ENCODE measurements at regions of chr7 and their contacts with region 1.

Region 1: DNA sequence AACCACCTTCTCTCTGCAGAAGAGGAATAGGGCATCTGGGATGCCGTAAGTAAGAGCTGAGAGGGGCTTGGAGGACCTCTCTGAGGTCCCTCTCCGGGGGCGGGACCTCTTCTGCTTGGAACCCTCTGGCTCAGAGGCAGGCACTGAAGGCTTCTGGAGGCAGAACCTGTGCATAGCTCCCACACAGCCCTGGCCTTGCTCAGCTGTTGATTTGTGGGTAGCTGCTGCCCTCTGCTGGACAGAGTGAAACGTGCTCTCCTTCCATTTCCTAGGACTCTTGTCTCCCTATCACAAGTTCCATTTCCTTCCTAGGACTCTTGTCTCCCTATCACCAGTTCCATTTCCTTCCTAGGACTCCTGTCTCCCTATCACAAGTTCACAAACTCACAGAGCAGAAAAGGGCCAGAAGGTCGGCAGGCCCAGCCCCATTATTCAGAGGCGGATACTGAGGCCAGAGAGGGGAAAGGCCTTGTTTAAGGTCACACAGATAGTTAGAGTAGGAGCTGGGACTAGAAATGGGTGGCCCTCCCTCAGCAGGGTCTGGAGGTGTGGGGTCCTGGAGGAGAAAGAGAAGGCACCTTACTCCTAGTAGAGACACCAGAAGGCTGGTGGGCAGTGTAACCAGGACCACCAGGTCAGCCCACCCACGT is 30.3 kb upstream of the GARS1 start:
- DNase-seq: peak; percentile 81 to 85
- H3K4me3 ChIP-seq: no peak overlapping the region
- H3K4me3 Mint-ChIP-seq: no peak overlapping the region
- H3K27ac Mint-ChIP-seq: no peak overlapping the region
- H3K4me1 ChIP-seq: no peaks in the 10 kb centered on the region
- H3K4me1 Mint-ChIP-seq: no peaks in the 10 kb centered on the region
- H3K27me3 ChIP-seq: no peaks in the 10 kb centered on the region
- H3K27me3 Mint-ChIP-seq: no peaks in the 10 kb centered on the region
- CTCF ChIP-seq: peak; percentile 90 to 96

Region 2: DNA sequence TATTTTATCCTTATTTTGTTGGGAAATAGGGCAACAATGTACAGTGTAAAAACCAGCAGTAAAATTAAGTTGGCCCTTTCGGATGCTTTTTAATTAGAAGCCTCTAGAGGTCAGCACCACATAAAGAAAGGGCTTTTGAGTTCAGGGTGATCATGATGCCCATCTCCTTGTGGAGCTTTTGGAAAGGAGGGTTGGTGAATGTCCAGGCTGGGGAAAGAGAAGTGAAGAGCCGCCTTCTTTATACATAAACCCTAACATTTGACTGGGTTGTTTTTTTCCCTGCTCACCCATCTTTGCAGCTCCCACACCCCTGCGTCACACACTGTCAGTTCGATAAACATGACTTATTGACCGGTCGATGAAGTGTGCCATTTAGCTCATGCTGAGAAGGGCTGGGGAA is 399.8 kb before region 1 on chr7:
- CTCF ChIA-PET with region 1: interaction called, 10 read pairs
- POLR2A ChIA-PET with region 1: no interaction called
- intact Hi-C with region 1: loop called (anchors 1 kb)
- DNase-seq: peak in 1 of 2 experiments; percentile 46
- H3K4me3 ChIP-seq: no peak overlapping the region
- H3K4me3 Mint-ChIP-seq: no peak overlapping the region
- H3K27ac Mint-ChIP-seq: no peak overlapping the region
- H3K4me1 ChIP-seq: peaks cover 15% of the 10 kb centered on the region; the same call in 1 of the 2 replicates
- H3K4me1 Mint-ChIP-seq: no peaks in the 10 kb centered on the region
- H3K27me3 ChIP-seq: no peaks in the 10 kb centered on the region
- H3K27me3 Mint-ChIP-seq: peaks cover 13% of the 10 kb centered on the region
- CTCF ChIP-seq: peak; percentile 25 to 59

Region 3: DNA sequence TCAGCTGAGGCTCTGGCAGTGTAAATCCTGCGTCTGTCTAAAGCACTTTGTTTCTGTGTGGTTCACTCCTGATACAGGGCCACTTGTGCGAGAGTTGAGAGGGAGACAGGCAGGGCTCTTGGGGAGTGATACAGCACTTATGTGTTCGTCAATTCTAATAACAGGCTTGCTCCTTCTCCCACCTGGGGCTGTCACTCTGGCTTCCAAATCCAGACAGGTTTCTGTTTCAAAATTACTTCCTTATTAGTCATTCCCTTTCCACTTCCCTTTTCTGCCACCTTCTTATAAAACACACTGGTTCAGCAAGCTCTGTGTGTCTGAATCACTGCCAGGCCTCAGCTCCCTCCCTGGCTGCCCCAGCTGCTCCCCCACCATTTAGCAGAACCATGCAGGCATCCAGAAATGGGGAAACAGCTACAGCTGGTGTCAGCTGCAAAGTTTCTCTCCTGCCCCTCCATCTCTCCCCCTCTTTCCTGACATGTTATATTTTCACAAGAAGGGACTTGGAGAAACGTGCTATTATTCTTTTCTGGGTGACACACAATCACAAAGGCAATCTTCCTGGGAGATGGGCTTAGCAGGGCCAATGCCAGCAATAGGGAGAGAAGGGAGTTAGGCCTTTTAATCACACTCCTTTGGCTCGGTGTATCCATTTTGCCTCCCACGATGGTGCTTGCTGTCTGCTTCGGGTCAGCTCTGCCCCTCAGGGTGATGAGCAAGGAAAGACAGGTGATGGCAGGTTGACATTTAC is 338.3 kb before region 1 on chr7:
- CTCF ChIA-PET with region 1: no interaction called
- POLR2A ChIA-PET with region 1: no interaction called
- intact Hi-C with region 1: loop called (anchors 1 kb)
- DNase-seq: no peak
- H3K4me3 ChIP-seq: no peak overlapping the region
- H3K4me3 Mint-ChIP-seq: no peak overlapping the region
- H3K27ac Mint-ChIP-seq: no peak overlapping the region
- H3K4me1 ChIP-seq: 0 out of 2 replicates have a peak, but pooled peaks cover 5% of the 10 kb centered on the region
- H3K4me1 Mint-ChIP-seq: peaks cover 15% of the 10 kb centered on the region
- H3K27me3 ChIP-seq: no peaks in the 10 kb centered on the region; the same call in 1 of the 2 replicates
- H3K27me3 Mint-ChIP-seq: peaks cover 3% of the 10 kb centered on the region
- CTCF ChIP-seq: no peak

Region 4: GRCh38 chr7:30252885-30253795 is 311.2 kb before region 1 on chr7:
- CTCF ChIA-PET with region 1: no interaction called
- POLR2A ChIA-PET with region 1: no interaction called
- intact Hi-C with region 1: no loop called
- DNase-seq: no peak
- H3K4me3 ChIP-seq: no peak overlapping the region
- H3K4me3 Mint-ChIP-seq: no peak overlapping the region
- H3K27ac Mint-ChIP-seq: no peak overlapping the region
- H3K4me1 ChIP-seq: peaks cover 10% of the 10 kb centered on the region
- H3K4me1 Mint-ChIP-seq: peaks cover 14% of the 10 kb centered on the region
- H3K27me3 ChIP-seq: no peaks in the 10 kb centered on the region
- H3K27me3 Mint-ChIP-seq: no peaks in the 10 kb centered on the region
- CTCF ChIP-seq: no peak

Region 5: DNA sequence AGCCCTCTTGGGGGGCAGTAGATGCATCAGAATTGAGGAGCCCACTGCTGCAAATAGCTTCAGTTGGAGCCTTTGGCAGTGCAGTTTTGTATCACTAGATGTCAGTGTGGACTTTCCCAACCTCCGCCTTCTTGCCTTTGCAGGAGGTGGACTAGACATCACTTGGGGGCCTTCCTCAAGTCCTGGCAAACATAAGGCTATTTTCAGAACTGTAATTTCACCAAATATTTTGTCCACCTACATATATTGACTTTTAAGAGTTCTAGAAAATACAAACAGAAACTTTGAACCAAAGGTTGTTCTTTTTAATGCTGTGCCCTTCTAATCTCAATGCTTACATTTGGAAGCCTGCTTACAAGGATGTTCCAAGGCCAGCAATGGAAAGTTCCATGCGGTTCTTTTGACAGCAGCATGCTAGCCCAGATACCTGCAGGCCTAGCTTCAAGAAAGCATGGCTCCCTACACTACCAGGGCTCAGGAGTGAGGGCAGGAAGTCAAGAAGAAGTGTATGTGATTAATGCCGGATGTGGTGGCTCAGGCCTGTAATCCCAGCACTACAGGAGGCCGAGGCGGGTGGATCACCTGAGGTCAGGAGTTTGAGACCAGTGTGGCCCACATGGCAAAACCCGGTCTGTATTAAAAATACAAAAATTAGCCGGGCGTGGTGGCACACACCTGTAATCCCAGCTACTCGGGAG is 288.0 kb before region 1 on chr7:
- CTCF ChIA-PET with region 1: interaction called, 35 read pairs
- POLR2A ChIA-PET with region 1: no interaction called
- intact Hi-C with region 1: loop called (anchors 1 kb)
- DNase-seq: peak; percentile 61 to 69
- H3K4me3 ChIP-seq: no peak overlapping the region
- H3K4me3 Mint-ChIP-seq: no peak overlapping the region
- H3K27ac Mint-ChIP-seq: no peak overlapping the region
- H3K4me1 ChIP-seq: no peaks in the 10 kb centered on the region
- H3K4me1 Mint-ChIP-seq: peaks cover 4% of the 10 kb centered on the region
- H3K27me3 ChIP-seq: no peaks in the 10 kb centered on the region
- H3K27me3 Mint-ChIP-seq: no peaks in the 10 kb centered on the region
- CTCF ChIP-seq: peak; percentile 72 to 76

Region 6: GRCh38 chr7:30422922-30423321 is 141.4 kb before region 1 on chr7:
- CTCF ChIA-PET with region 1: no interaction called
- POLR2A ChIA-PET with region 1: no interaction called
- intact Hi-C with region 1: loop called (anchors 5 kb)
- DNase-seq: no peak
- H3K4me3 ChIP-seq: no peak overlapping the region
- H3K4me3 Mint-ChIP-seq: no peak overlapping the region
- H3K27ac Mint-ChIP-seq: no peak overlapping the region
- H3K4me1 ChIP-seq: 0 out of 2 replicates have a peak, but pooled peaks cover 6% of the 10 kb centered on the region
- H3K4me1 Mint-ChIP-seq: peaks cover 4% of the 10 kb centered on the region
- H3K27me3 ChIP-seq: no peaks in the 10 kb centered on the region
- H3K27me3 Mint-ChIP-seq: no peaks in the 10 kb centered on the region
- CTCF ChIP-seq: no peak

Region 7: DNA sequence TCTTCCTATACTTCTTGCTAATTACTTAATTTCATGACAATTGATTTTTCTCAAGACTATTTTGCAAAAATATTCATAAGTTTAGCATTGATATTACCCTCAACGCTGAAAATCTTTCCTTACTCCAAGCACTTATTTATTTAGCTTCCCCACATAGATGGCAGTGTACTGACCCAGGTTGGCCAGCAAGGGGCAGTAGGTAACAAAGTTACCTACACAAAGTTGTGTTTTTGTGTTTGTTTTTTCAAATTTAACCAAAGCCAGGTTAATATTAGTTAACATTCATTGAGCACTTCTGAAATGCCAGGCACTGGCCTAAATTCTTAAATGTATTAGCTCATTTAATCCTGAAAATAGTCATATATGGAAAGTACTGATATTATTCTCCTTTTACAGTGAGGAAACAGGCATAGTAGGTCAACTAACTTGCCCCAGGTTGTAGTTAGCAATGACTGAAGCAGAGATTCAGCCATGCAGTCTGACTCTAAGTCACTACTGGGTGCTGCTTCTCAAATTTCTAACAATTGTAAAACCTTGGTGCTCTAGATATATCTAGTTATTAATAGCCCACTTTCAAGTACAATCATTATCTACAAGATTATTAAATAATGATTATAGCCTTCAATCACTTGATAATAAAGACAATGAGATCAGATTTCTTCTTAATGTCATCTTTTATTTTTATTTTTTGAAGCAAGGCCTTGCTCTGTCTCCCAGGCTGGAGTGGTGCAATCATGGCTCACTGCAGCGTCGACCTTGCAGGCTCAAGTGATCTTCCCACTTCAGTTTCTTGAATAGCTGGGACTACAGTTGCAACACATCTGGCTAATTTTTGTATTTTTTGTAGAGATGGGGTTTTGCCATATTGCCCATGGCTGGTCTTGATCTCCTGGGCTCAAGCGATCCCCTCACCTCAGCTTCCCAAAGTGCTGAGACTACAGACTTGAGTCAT is 54.0 kb before region 1 on chr7:
- CTCF ChIA-PET with region 1: interaction called, 20 read pairs
- POLR2A ChIA-PET with region 1: no interaction called
- intact Hi-C with region 1: loop called (anchors 1 kb)
- DNase-seq: peak in 1 of 2 experiments; percentile 38
- H3K4me3 ChIP-seq: no peak overlapping the region
- H3K4me3 Mint-ChIP-seq: no peak overlapping the region
- H3K27ac Mint-ChIP-seq: no peak overlapping the region
- H3K4me1 ChIP-seq: peaks cover 10% of the 10 kb centered on the region; the same call in 1 of the 2 replicates
- H3K4me1 Mint-ChIP-seq: peaks cover 20% of the 10 kb centered on the region
- H3K27me3 ChIP-seq: no peaks in the 10 kb centered on the region
- H3K27me3 Mint-ChIP-seq: no peaks in the 10 kb centered on the region
- CTCF ChIP-seq: peak; percentile 57 to 78

Region 8: DNA sequence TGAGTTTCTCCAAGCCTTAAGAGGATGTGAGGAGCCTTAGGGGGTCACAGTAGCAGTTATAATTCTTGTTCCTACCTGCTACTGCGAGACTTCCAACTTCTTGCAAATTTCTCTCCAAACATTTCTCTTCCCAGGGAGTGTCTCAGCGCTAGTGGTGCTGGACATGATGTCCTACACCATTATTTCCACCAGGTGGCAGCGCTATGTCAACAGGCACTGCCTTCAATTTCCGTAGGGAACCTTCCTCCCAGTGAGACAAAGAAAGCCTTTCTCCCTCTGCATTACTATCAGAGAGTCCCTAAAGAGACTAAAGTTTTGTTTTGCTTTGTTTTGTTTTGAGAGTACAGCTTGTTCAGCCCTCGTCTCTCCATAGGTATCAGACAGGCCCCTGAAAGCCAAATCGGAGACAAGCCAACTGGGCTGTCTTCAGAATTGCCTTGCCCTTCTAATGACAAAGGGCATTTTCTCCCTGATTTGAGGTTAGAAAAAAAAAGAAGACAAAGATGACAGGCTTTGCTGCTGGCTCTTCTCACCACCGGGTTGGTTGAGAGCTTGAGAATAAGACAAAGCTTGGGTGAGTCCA is 15.5 kb before region 1 on chr7:
- CTCF ChIA-PET with region 1: interaction called, 14 read pairs
- POLR2A ChIA-PET with region 1: no interaction called
- intact Hi-C with region 1: loop called (anchors 1 kb)
- DNase-seq: peak; percentile 70 to 76
- H3K4me3 ChIP-seq: no peak overlapping the region
- H3K4me3 Mint-ChIP-seq: no peak overlapping the region
- H3K27ac Mint-ChIP-seq: no peak overlapping the region
- H3K4me1 ChIP-seq: peaks cover 9% of the 10 kb centered on the region
- H3K4me1 Mint-ChIP-seq: peaks cover 12% of the 10 kb centered on the region
- H3K27me3 ChIP-seq: no peaks in the 10 kb centered on the region
- H3K27me3 Mint-ChIP-seq: peaks cover 4% of the 10 kb centered on the region
- CTCF ChIP-seq: peak; percentile 76 to 88

Region 9: GRCh38 chr7:30727061-30727945 is 162.9 kb after region 1 on chr7:
- CTCF ChIA-PET with region 1: no interaction called
- POLR2A ChIA-PET with region 1: no interaction called
- intact Hi-C with region 1: no loop called
- DNase-seq: peak in 1 of 2 experiments; percentile 26
- H3K4me3 ChIP-seq: no peak overlapping the region
- H3K4me3 Mint-ChIP-seq: no peak overlapping the region
- H3K27ac Mint-ChIP-seq: peak overlapping the region; percentile 55
- H3K4me1 ChIP-seq: peaks cover 19% of the 10 kb centered on the region
- H3K4me1 Mint-ChIP-seq: peaks cover 23% of the 10 kb centered on the region
- H3K27me3 ChIP-seq: no peaks in the 10 kb centered on the region
- H3K27me3 Mint-ChIP-seq: no peaks in the 10 kb centered on the region
- CTCF ChIP-seq: no peak

Region 10: DNA sequence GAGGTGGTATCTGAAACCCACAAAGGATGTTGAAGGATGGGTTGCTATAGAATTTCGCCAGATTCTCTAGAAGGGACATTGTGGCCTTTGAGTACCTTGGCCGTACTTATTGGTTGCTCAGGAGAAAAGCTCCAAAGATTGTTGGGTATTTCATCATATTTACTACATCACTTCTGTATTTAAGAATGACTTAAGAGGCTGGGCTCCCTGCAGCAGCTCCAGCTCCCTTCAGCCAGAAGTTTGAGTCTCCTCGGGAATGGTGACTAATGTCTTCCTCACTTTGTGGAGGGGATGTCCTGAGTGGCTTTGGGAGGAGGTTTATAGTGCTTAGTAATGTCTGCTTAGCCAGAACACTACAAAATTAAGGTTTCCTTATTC is 225.0 kb after region 1 on chr7:
- CTCF ChIA-PET with region 1: no interaction called
- POLR2A ChIA-PET with region 1: no interaction called
- intact Hi-C with region 1: no loop called
- DNase-seq: no peak
- H3K4me3 ChIP-seq: no peak overlapping the region
- H3K4me3 Mint-ChIP-seq: no peak overlapping the region
- H3K27ac Mint-ChIP-seq: no peak overlapping the region
- H3K4me1 ChIP-seq: no peaks in the 10 kb centered on the region; the same call in 1 of the 2 replicates
- H3K4me1 Mint-ChIP-seq: peaks cover 2% of the 10 kb centered on the region
- H3K27me3 ChIP-seq: no peaks in the 10 kb centered on the region
- H3K27me3 Mint-ChIP-seq: no peaks in the 10 kb centered on the region
- CTCF ChIP-seq: no peak